ENCODE measurements at regions of chr10 and their contacts with region 1.

Region 1: DNA sequence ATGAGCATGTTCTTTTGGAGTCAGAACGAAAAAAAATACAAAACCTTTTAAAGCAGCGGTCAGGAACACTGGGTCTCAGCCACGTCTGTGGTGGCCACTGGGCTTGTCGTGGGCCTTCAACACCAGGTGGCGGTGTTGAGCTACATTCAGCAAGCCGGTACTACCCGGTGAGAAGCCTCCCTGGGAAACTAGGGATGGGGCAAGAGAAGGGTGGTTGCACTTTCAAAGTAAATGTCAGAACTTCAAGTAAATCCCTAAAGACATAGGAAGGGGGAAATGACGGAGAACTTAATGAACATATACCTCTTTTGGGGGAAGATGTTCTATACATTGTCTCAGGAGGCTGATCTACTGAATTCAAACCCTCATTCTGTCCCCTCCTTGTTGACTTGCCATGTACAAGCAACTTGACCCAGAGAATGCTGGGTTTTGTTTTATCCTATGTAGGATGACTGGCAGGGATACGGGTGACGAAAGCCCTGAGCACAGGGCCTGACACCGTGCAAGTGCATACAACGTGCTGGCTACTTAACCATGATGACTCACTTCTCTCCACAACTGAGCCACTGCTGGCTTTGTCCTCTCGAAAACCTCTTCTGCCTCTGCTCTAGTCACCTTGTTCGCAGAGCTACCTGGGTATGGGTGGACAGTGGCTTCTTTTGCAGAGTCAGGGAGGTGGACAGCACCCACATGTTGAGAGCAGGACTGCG is 49.0 kb upstream of the BAMBI start:
- DNase-seq: peak; percentile 84
- H3K4me3 Mint-ChIP-seq: no peak overlapping the region
- H3K27ac Mint-ChIP-seq: no peak overlapping the region
- H3K4me1 Mint-ChIP-seq: peaks cover 15% of the 10 kb centered on the region
- H3K27me3 Mint-ChIP-seq: no peaks in the 10 kb centered on the region
- CTCF ChIP-seq: peak; percentile 80

Region 2: GRCh38 chr10:28432210-28432676 is 196.1 kb before region 1 on chr10:
- CTCF ChIA-PET with region 1: no interaction called
- POLR2A ChIA-PET with region 1: no interaction called
- intact Hi-C with region 1: loop called (anchors 10 kb)
- DNase-seq: peak; percentile 80
- H3K4me3 Mint-ChIP-seq: no peak overlapping the region
- H3K27ac Mint-ChIP-seq: no peak overlapping the region
- H3K4me1 Mint-ChIP-seq: peaks cover 8% of the 10 kb centered on the region
- H3K27me3 Mint-ChIP-seq: peaks cover 9% of the 10 kb centered on the region
- CTCF ChIP-seq: peak; percentile 59

Region 3: DNA sequence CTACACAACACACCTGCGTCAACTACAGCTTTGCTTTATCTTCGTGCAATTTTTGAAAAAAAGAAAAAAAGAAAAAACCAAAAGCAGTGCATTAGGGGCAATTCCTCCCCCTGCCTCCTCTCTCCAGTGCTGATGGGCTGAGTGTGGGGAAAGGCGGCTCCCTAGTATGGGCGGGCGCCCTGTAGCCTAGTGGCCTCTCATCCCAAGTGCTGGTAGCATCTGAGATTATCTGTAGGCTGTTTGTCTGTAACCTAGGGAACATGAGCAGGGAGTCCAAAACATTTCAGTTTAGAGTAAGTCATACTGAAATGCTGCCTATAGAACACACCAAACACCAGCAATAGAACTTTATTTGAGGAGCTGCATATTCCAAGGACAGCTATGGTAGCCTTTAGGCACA is 24.4 kb after region 1 on chr10:
- CTCF ChIA-PET with region 1: no interaction called
- POLR2A ChIA-PET with region 1: no interaction called
- intact Hi-C with region 1: no loop called
- DNase-seq: no peak
- H3K4me3 Mint-ChIP-seq: no peak overlapping the region
- H3K27ac Mint-ChIP-seq: no peak overlapping the region
- H3K4me1 Mint-ChIP-seq: no peaks in the 10 kb centered on the region
- H3K27me3 Mint-ChIP-seq: no peaks in the 10 kb centered on the region
- CTCF ChIP-seq: no peak

Region 4: GRCh38 chr10:28663576-28664313 is 35.4 kb after region 1 on chr10:
- CTCF ChIA-PET with region 1: interaction called, 4 read pairs
- POLR2A ChIA-PET with region 1: no interaction called
- intact Hi-C with region 1: loop called (anchors 1 kb)
- DNase-seq: peak; percentile 84
- H3K4me3 Mint-ChIP-seq: no peak overlapping the region
- H3K27ac Mint-ChIP-seq: no peak overlapping the region
- H3K4me1 Mint-ChIP-seq: peaks cover 18% of the 10 kb centered on the region
- H3K27me3 Mint-ChIP-seq: peaks cover 18% of the 10 kb centered on the region
- CTCF ChIP-seq: peak; percentile 92

Region 5: GRCh38 chr10:29131952-29132820 is 503.8 kb after region 1 on chr10:
- CTCF ChIA-PET with region 1: interaction called, 4 read pairs
- POLR2A ChIA-PET with region 1: no interaction called
- intact Hi-C with region 1: loop called (anchors 1 kb)
- DNase-seq: peak; percentile 44
- H3K4me3 Mint-ChIP-seq: no peak overlapping the region
- H3K27ac Mint-ChIP-seq: no peak overlapping the region
- H3K4me1 Mint-ChIP-seq: peaks cover 8% of the 10 kb centered on the region
- H3K27me3 Mint-ChIP-seq: peaks cover 5% of the 10 kb centered on the region
- CTCF ChIP-seq: no peak

Region 6: DNA sequence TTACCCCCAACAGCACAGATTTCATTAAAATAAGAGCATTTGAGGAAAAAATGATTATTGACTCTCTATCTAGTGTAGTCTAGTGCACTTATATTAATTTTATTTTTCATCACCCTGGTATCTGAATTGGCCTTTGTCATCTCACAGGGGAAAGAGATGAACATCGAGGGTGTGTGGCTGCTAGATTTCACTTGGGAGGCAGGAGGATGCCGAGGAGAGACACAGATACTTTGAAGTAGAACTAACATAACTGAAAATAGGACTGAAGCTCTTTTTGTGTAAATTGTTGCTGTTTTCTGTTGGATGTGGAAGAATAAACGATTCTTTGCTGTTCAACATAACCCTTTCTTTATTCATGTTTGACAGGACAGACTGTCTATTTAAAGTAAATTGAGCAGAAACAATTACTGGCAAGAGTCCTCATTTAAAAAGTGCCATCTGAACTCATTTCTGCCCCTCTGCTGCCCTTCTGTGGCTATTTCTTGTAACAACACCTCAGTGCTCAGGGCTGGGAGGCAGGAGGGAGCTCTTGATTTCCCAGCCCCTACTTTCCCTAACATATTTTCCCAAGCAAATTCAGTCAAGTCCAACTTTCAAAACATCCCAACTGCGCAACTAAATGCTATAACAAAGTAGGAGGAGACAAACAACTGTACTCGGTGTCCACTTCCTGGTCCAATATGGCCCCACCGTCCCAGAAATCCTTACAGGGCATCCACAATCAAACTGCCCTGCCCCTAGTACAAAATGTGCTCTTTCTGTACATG is 676.1 kb after region 1 on chr10:
- CTCF ChIA-PET with region 1: interaction called, 5 read pairs
- POLR2A ChIA-PET with region 1: no interaction called
- intact Hi-C with region 1: loop called (anchors 1 kb)
- DNase-seq: peak; percentile 78
- H3K4me3 Mint-ChIP-seq: no peak overlapping the region
- H3K27ac Mint-ChIP-seq: no peak overlapping the region
- H3K4me1 Mint-ChIP-seq: no peaks in the 10 kb centered on the region
- H3K27me3 Mint-ChIP-seq: peaks cover 12% of the 10 kb centered on the region
- CTCF ChIP-seq: peak; percentile 83